PC-3 (cell line): ENCODE measurements at regions of chr4 and their contacts with region 1.

Region 1: GRCh38 chr4:18021722-18022571 is at the start of gene LCORL:
- DNase-seq: peak; percentile 91
- ATAC-seq: peak; percentile 81
- H3K4me3 ChIP-seq: peak within 1 kb of the TSS; percentile 98
- H3K27ac ChIP-seq: peak within 1 kb of the TSS; percentile 43
- H3K4me1 ChIP-seq: peaks cover 5% of the 10 kb centered on the region; the same call in 1 of the 2 replicates
- H3K27me3 ChIP-seq: no peaks in the 10 kb centered on the region
- CTCF ChIP-seq: no peak
- total RNA-seq, gene LCORL: 2.9 and 3.7 TPM in 2 replicates

Region 2: DNA sequence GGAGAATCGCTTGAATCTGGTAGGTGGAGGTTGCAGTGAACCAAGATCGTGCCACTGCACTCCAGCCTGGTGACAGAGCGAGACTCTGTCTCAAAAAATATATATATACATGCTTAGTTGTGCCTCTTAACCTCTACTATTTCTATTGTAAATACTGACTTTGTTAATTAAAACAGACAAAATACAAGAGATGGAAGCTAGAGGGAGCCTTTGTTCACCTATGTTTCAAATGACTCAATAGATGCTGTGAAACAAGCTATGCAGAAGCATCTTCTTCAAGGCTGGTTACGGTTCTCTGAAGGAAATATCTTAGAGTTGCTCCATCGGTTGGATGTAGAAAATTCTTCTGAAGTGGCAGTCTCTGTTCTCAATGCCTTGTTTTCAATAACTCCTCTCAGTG is 204.9 kb before region 1 on chr4:
- CTCF ChIA-PET with region 1: no interaction called
- POLR2A ChIA-PET with region 1: no interaction called
- intact Hi-C with region 1: loop called (anchors 1 kb)
- DNase-seq: peak; percentile 48
- ATAC-seq: peak; percentile 71
- H3K4me3 ChIP-seq: no peak overlapping the region
- H3K27ac ChIP-seq: no peak overlapping the region
- H3K4me1 ChIP-seq: peaks cover 8% of the 10 kb centered on the region; the same call in 1 of the 2 replicates
- H3K27me3 ChIP-seq: no peaks in the 10 kb centered on the region
- CTCF ChIP-seq: peak; percentile 57

Region 3: GRCh38 chr4:17981063-17981462 is 40.9 kb before region 1 on chr4:
- CTCF ChIA-PET with region 1: no interaction called
- POLR2A ChIA-PET with region 1: no interaction called
- intact Hi-C with region 1: loop called (anchors 5 kb)
- DNase-seq: peak; percentile 15
- ATAC-seq: no peak
- H3K4me3 ChIP-seq: no peak overlapping the region
- H3K27ac ChIP-seq: no peak overlapping the region
- H3K4me1 ChIP-seq: no peaks in the 10 kb centered on the region; the same call in 1 of the 2 replicates
- H3K27me3 ChIP-seq: no peaks in the 10 kb centered on the region
- CTCF ChIP-seq: no peak

Region 4: GRCh38 chr4:18291256-18291655 is 269.3 kb after region 1 on chr4:
- CTCF ChIA-PET with region 1: no interaction called
- POLR2A ChIA-PET with region 1: no interaction called
- intact Hi-C with region 1: no loop called
- DNase-seq: no peak
- ATAC-seq: no peak
- H3K4me3 ChIP-seq: no peak overlapping the region
- H3K27ac ChIP-seq: no peak overlapping the region
- H3K4me1 ChIP-seq: no peaks in the 10 kb centered on the region
- H3K27me3 ChIP-seq: peaks cover 8% of the 10 kb centered on the region
- CTCF ChIP-seq: no peak